ENCODE measurements at regions of chr6 and their contacts with region 1.

Region 1: GRCh38 chr6:31702819-31703522 is at the start of gene ABHD16A:
- DNase-seq: peak; percentile 93 to 97 (median 96)
- ATAC-seq: peak; percentile 95
- H3K4me3 ChIP-seq: peak within 1 kb of the TSS; percentile 98
- H3K4me3 Mint-ChIP-seq: peak within 1 kb of the TSS; percentile 92 to 100 (median 98)
- H3K27ac ChIP-seq: peak within 1 kb of the TSS; percentile 98
- H3K27ac Mint-ChIP-seq: peak within 1 kb of the TSS; percentile 95 to 98 (median 97)
- H3K4me1 ChIP-seq: peaks cover 21 to 28% of the 10 kb centered on the region in 2 donors
- H3K4me1 Mint-ChIP-seq: peaks cover 16 to 39% (median 31%) of the 10 kb centered on the region in 7 donors
- H3K27me3 ChIP-seq: no peaks in the 10 kb centered on the region
- H3K27me3 Mint-ChIP-seq: peaks cover 0 to 2% (median 0%) of the 10 kb centered on the region in 5 donors
- total RNA-seq, gene ABHD16A: 60.1 to 71.7 (median 65.2) TPM

Region 2: DNA sequence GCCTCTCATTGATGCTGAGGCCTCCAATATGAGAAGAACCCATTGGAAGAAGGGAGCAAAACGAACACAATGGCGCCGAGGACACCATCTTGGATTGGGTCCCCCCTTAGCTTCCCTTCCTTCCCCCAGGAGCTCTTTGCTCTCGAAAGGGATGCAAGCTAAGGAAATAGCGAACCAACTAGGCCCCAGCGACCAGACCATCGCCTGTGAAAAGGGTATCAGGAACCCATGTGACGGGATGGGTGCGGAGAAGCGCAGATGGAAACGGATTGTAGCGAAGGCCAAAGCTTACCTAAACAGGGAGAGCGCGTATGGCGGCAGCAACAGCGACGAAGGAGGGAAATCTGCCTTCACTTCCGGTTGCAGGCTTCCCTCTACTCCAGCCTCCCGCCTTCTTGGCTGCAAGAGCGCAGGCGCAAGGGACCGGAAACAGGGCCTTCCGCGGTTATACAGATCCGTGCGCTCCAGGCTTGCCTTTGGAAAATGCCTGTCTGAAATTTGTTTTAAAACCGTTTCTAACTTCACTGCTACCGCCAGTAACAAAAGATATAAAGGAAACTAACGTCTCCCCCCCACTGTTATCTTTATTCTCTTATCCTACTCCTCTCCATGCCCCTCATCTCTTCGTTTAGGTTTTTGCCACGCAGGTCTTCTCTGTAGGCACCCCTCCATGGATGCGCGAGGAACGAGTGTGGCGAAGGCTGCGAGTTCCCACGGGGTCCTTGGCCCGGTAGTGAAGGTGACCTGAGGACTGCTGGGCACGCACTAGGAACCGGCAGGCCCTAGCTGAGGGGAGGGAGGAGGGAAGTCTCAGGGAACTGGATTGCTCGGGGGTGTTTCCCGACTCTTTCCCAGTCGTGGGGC is 161.1 kb before region 1 on chr6 and contains the start of gene DDX39B:
- CTCF ChIA-PET with region 1: interaction called, 4 read pairs
- POLR2A ChIA-PET with region 1: no interaction called
- intact Hi-C with region 1: loop called (anchors 1 to 10 kb)
- DNase-seq: peak; percentile 80 to 97 (median 94)
- ATAC-seq: peak; percentile 83
- H3K4me3 ChIP-seq: peak within 1 kb of the TSS; percentile 77
- H3K4me3 Mint-ChIP-seq: peak within 1 kb of the TSS; percentile 84 to 99 (median 98)
- H3K27ac ChIP-seq: peak within 1 kb of the TSS; percentile 97
- H3K27ac Mint-ChIP-seq: peak within 1 kb of the TSS; percentile 90 to 100 (median 100)
- H3K4me1 ChIP-seq: peaks cover 34 to 45% of the 10 kb centered on the region in 2 donors
- H3K4me1 Mint-ChIP-seq: peaks cover 34 to 65% (median 55%) of the 10 kb centered on the region in 7 donors
- H3K27me3 ChIP-seq: no peaks in the 10 kb centered on the region
- H3K27me3 Mint-ChIP-seq: no peaks in the 10 kb centered on the region
- total RNA-seq, gene DDX39B: 443 to 761 (median 546) TPM

Region 3: DNA sequence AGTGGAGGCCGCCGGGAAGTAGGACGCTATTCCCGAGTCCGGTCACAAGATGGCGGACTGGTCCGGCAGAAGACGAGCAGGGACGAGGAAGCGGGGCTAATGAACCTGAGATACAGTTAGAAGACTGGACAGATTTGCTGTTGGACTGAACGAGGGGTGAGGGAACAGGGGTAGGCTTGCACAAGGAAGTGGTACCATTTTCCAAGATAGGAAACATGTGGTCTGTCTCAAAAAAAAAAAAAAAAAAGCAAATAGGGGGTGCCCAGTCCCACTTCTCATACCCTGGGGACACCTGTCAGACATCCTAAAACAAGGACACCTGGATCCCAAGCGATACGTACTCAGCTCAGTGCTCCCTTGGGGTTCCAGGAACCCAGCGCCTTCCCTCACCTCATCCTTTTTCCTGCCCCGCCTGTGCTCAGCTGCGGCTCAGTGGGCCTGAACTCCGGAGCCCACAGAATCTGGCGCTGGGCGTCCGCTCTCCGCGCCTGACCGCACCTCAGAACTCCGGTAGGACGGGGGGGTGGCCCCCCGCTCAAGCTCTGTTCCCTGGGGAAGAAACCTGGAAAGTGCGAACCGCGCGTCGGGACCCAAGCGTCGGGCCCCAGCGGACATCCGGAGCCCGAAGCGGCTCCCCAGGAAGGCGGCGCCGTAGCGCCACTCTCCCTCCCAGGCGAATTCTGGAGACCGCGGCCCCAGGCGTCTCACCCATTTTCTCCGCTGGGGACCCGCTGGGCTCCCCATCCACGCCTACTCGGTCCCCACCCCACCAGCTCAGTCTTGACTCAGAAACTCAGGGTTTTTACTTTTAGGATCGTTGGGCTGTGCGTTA is 21.9 kb before region 1 on chr6 and contains the start of gene LY6G5C:
- CTCF ChIA-PET with region 1: no interaction called
- POLR2A ChIA-PET with region 1: interaction called, 5 read pairs
- intact Hi-C with region 1: loop called in 1 of 2 experiments (anchors 2 kb)
- DNase-seq: peak in 8 of 9 donors; percentile 28 to 65 (median 48)
- ATAC-seq: peak; percentile 80
- H3K4me3 ChIP-seq: peak within 1 kb of the TSS; percentile 78
- H3K4me3 Mint-ChIP-seq: peak within 1 kb of the TSS; percentile 86 to 98 (median 90)
- H3K27ac ChIP-seq: peak within 1 kb of the TSS; percentile 68
- H3K27ac Mint-ChIP-seq: peak within 1 kb of the TSS; percentile 60 to 86 (median 68)
- H3K4me1 ChIP-seq: peaks cover 15 to 16% of the 10 kb centered on the region in 2 donors
- H3K4me1 Mint-ChIP-seq: peaks cover 14 to 32% (median 19%) of the 10 kb centered on the region in 7 donors
- H3K27me3 ChIP-seq: no peaks in the 10 kb centered on the region
- H3K27me3 Mint-ChIP-seq: no peaks in the 10 kb centered on the region
- total RNA-seq, gene LY6G5C: 2.4 to 4.3 (median 3.1) TPM

Region 4: DNA sequence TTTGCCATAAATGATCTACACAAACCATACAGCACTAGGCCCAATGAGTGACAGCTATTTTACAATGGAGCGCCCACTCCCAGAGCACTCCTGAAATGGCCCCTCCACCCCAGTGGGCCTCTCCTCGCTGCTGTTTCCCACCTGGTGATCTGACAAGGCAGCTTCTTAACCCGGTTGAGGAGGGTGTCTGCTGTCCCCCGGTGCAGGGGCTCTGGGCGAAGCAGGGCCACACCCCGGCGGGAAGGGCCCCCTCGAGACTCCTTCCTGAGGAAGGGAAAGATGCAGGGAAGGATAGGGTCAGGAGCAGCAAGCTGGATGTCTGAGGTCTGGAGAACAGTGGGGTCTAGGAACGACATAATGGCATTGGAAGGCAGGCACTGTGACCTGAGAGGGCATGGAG is 10.1 kb before region 1 on chr6:
- CTCF ChIA-PET with region 1: no interaction called
- POLR2A ChIA-PET with region 1: interaction called, 13 read pairs
- intact Hi-C with region 1: no loop called
- DNase-seq: no peak
- ATAC-seq: no peak
- H3K4me3 ChIP-seq: no peak overlapping the region
- H3K4me3 Mint-ChIP-seq: no peak overlapping the region
- H3K27ac ChIP-seq: no peak overlapping the region
- H3K27ac Mint-ChIP-seq: peak overlapping the region in 1 of 9 donors; percentile 48
- H3K4me1 ChIP-seq: no peaks in the 10 kb centered on the region
- H3K4me1 Mint-ChIP-seq: peaks cover 5 to 13% (median 10%) of the 10 kb centered on the region in 7 donors
- H3K27me3 ChIP-seq: no peaks in the 10 kb centered on the region
- H3K27me3 Mint-ChIP-seq: no peaks in the 10 kb centered on the region

Region 5: DNA sequence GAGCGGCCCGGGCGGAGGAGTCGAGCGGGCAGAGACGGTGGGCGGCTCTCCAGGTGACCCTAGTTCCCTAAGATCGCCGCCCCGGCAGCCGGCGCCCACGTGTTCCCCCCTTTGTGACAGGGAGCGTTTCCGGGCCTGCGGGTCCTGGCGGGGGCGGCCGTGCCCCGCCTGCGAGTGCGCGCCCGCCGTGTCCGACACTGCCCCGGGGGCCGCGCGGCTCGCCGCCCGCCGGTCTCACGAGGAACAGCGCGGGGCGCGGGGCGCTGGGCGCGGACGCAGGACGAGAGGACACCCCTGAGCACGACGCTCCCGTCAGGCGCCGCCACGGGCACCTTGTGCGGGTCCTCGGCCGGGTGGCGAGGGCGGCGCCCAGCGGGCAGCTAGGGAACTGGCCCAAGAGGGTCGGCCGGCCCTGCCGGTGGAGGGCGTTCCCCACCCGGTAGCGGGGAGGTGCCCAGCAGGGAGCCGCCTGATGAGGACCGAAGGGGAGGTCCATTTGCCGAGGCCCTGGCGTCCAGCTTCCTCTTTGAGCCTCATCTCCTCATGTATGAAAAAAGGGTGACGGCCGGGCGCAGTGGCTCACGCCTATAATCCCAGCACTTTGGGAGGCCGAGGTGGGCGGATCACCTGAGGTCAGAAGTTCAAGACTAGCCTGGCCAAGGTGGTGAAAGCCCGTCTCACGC is 92.8 kb after region 1 on chr6 and contains the start of gene VARS1:
- CTCF ChIA-PET with region 1: no interaction called
- POLR2A ChIA-PET with region 1: no interaction called
- intact Hi-C with region 1: loop called in 1 of 2 experiments (anchors 1 kb)
- DNase-seq: peak; percentile 75 to 92 (median 85)
- ATAC-seq: peak; percentile 96
- H3K4me3 ChIP-seq: peak within 1 kb of the TSS; percentile 76
- H3K4me3 Mint-ChIP-seq: peak within 1 kb of the TSS; percentile 85 to 99 (median 96)
- H3K27ac ChIP-seq: peak within 1 kb of the TSS; percentile 93
- H3K27ac Mint-ChIP-seq: peak within 1 kb of the TSS; percentile 80 to 99 (median 98)
- H3K4me1 ChIP-seq: peaks cover 24 to 32% of the 10 kb centered on the region in 2 donors
- H3K4me1 Mint-ChIP-seq: peaks cover 12 to 55% (median 36%) of the 10 kb centered on the region in 7 donors
- H3K27me3 ChIP-seq: no peaks in the 10 kb centered on the region
- H3K27me3 Mint-ChIP-seq: no peaks in the 10 kb centered on the region
- total RNA-seq, gene VARS1: 34.3 to 84.2 (median 53.2) TPM

Region 6: DNA sequence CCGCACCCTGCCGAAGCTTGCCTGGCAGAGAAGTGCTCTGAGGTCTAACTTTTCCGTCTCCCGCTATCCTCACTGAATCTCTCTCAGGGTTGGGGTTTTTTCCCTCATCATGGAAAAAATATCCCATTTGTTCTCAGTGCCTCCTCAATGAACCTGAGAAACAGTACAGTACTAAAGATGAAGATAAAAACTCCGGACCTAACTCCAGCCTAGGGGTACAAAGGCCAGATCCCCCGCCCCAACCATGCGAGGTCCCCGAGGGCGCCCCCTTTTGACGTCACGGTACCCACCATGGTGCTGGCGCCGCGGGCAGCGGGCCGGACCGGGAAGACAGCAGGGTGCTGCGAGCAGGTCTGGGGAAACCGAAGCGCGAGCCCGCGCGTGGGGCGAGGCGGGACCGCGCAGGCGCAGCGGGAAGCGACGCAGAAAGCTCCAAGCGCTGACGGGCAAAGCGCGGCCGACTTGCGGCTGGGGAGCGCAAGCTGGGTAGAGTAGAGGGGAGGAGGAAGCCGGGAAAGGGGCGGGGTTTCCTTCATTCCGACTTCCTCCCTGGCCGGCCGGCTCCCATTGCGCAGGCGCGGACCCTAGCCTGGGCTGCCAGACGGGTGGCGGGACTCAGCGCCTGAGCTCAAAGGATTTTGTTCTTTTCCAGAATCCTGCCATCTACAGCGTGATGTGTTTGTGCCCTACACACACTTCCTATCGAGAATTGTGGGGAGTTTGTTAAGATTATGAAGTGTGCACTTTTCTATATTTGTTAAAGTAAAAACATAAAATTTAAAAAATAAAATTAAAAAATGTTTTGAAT is 103.7 kb after region 1 on chr6 and contains the start of gene LSM2:
- CTCF ChIA-PET with region 1: no interaction called
- POLR2A ChIA-PET with region 1: interaction called, 15 read pairs
- intact Hi-C with region 1: no loop called
- DNase-seq: peak; percentile 96 to 98 (median 98)
- ATAC-seq: peak; percentile 100
- H3K4me3 ChIP-seq: peak within 1 kb of the TSS; percentile 92
- H3K4me3 Mint-ChIP-seq: peak within 1 kb of the TSS; percentile 86 to 95 (median 92)
- H3K27ac ChIP-seq: peak within 1 kb of the TSS; percentile 89
- H3K27ac Mint-ChIP-seq: peak within 1 kb of the TSS; percentile 88 to 97 (median 93)
- H3K4me1 ChIP-seq: peaks cover 9 to 14% of the 10 kb centered on the region in 2 donors
- H3K4me1 Mint-ChIP-seq: peaks cover 16 to 47% (median 30%) of the 10 kb centered on the region in 7 donors
- H3K27me3 ChIP-seq: no peaks in the 10 kb centered on the region
- H3K27me3 Mint-ChIP-seq: no peaks in the 10 kb centered on the region
- total RNA-seq, gene LSM2: 22.9 to 94.5 (median 29.2) TPM

Region 7: DNA sequence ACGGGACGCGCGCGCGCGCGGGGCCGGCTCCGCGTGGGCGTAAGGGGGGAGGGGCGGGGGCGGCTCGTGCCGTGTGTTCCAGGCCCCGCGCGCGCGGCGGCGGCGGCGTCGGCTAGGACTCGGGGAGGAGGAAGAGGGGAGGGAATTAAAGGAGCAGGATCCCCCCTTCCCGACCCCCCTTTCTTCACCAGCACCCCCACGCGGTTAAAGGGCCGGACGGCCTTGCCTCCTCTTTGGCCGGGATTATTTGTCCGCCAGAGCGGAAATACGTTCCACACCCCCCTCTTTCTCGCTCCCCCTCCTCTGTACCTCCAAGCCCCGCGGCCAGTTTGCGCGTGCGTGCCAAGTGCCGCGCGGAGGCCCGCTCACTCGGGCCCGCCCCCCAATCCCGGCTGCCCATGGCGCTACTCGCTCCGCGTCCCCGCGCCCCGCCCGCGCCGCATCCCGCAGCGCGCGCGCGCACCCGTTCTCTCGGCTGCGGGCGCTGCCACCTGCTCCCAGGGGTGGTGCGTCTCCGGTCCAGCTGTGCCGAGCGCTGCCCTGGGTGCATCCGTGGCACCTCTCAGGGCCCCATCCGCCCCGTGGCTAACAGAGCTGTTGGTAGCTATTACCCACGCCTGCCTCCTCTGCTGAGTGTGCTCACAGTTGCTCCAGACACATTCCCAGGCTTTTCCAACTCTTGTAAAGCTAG is 199.1 kb after region 1 on chr6 and contains the start of gene ZBTB12:
- CTCF ChIA-PET with region 1: no interaction called
- POLR2A ChIA-PET with region 1: no interaction called
- intact Hi-C with region 1: loop called (anchors 1 kb)
- DNase-seq: peak; percentile 76 to 90 (median 84)
- ATAC-seq: peak; percentile 76
- H3K4me3 ChIP-seq: peak within 1 kb of the TSS; percentile 80
- H3K4me3 Mint-ChIP-seq: peak within 1 kb of the TSS; percentile 81 to 96 (median 88)
- H3K27ac ChIP-seq: peak within 1 kb of the TSS; percentile 83
- H3K27ac Mint-ChIP-seq: peak within 1 kb of the TSS; percentile 75 to 94 (median 86)
- H3K4me1 ChIP-seq: peaks cover 12 to 16% of the 10 kb centered on the region in 2 donors
- H3K4me1 Mint-ChIP-seq: peaks cover 18 to 34% (median 32%) of the 10 kb centered on the region in 7 donors
- H3K27me3 ChIP-seq: no peaks in the 10 kb centered on the region
- H3K27me3 Mint-ChIP-seq: peaks cover 0 to 11% (median 0%) of the 10 kb centered on the region in 5 donors
- total RNA-seq, gene ZBTB12: 0.77 to 4.5 (median 2.5) TPM

Measured in naive thymus-derived CD4-positive, alpha-beta T cell (primary cell).